MCF 10A (cell line): ENCODE measurements at regions of chr17 and their contacts with region 1.

Region 1: GRCh38 chr17:65231662-65232335 is 94.6 kb downstream of the RGS9 start:
- DNase-seq: peak; percentile 83
- H3K4me3 Mint-ChIP-seq: no peak overlapping the region
- H3K27ac Mint-ChIP-seq: no peak overlapping the region
- H3K4me1 Mint-ChIP-seq: no peaks in the 10 kb centered on the region
- H3K27me3 Mint-ChIP-seq: peaks cover 19% of the 10 kb centered on the region
- CTCF ChIP-seq: peak; percentile 83

Region 2: DNA sequence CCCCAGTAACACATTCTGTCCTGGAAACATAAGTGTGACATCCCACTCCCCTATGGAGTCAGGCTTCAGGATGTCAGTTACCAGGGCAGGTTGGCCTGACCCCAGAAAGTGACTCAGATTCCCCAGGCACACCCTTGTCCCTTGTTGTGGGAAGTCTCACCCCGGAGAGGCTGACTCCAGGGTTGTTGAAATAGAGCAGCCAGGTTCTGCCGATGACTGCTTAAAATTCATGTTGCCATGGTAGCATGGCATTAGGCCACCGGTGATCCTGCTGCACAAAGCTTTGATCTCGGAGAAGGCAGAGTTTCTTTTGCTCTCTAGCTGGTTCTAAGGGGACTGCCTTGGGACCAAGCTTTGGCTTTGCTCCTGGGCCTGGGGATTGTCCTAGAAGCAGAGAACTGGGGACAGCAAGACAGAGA is 12.0 kb after region 1 on chr17:
- CTCF ChIA-PET with region 1: interaction called, 20 read pairs
- POLR2A ChIA-PET with region 1: interaction called, 3 read pairs
- intact Hi-C with region 1: no loop called
- DNase-seq: peak; percentile 60
- H3K4me3 Mint-ChIP-seq: no peak overlapping the region
- H3K27ac Mint-ChIP-seq: no peak overlapping the region
- H3K4me1 Mint-ChIP-seq: peaks cover 6% of the 10 kb centered on the region
- H3K27me3 Mint-ChIP-seq: peaks cover 18% of the 10 kb centered on the region
- CTCF ChIP-seq: no peak

Region 3: DNA sequence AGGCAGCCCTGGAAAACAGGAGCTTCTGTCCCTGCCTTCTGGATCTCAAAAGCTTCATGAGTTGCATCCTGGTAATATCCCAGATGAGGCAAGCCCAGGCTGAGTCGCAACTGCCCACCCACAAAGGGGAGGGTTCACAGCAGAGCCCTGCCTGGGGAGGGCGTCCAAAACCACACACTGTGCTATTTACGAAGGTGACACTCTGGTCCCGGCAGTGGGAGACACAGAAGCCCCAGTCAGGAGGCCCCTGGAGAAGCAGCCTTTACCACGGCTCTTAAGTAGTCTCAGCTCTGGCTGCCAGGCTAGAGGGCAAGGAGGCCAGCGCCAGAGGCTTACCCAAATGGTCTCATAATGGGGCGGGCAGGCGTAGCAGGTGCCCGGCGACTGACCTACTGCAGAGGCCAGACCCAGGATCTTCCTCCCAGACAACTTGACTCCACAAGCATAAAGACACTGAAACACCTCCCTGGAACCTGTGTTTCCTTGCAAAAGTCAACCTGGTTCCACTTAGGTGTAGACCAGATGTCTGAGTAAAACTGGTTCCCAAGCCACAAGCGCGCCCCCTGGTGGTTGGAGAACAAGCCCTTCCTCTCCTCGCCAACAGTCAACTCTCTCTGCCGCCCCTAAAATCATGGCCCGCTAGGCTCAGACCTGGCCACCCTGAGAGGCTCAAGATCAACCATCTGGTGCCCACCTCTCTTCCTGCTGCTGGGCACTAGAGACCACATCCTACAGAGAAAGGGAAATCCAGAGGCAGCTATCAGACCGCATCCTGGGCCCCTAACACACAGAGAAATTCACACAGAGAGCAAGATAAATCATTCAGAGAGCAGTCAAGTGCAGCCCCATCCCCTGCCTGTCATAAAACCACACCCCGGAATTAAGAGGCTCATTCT is 324.5 kb after region 1 on chr17:
- CTCF ChIA-PET with region 1: interaction called, 11 read pairs
- POLR2A ChIA-PET with region 1: no interaction called
- intact Hi-C with region 1: loop called (anchors 2 kb)
- DNase-seq: peak; percentile 78
- H3K4me3 Mint-ChIP-seq: no peak overlapping the region
- H3K27ac Mint-ChIP-seq: no peak overlapping the region
- H3K4me1 Mint-ChIP-seq: no peaks in the 10 kb centered on the region
- H3K27me3 Mint-ChIP-seq: peaks cover 10% of the 10 kb centered on the region
- CTCF ChIP-seq: peak; percentile 84

Region 4: GRCh38 chr17:65988081-65988850 is 756.5 kb after region 1 on chr17:
- CTCF ChIA-PET with region 1: interaction called, 34 read pairs
- POLR2A ChIA-PET with region 1: no interaction called
- intact Hi-C with region 1: loop called (anchors 1 kb)
- DNase-seq: peak; percentile 57
- H3K4me3 Mint-ChIP-seq: no peak overlapping the region
- H3K27ac Mint-ChIP-seq: no peak overlapping the region
- H3K4me1 Mint-ChIP-seq: peaks cover 17% of the 10 kb centered on the region
- H3K27me3 Mint-ChIP-seq: no peaks in the 10 kb centered on the region
- CTCF ChIP-seq: peak; percentile 70

Region 5: GRCh38 chr17:66165513-66166123 is 933.8 kb after region 1 on chr17:
- CTCF ChIA-PET with region 1: interaction called, 80 read pairs
- POLR2A ChIA-PET with region 1: no interaction called
- intact Hi-C with region 1: loop called (anchors 1 kb)
- DNase-seq: peak; percentile 61
- H3K4me3 Mint-ChIP-seq: no peak overlapping the region
- H3K27ac Mint-ChIP-seq: no peak overlapping the region
- H3K4me1 Mint-ChIP-seq: no peaks in the 10 kb centered on the region
- H3K27me3 Mint-ChIP-seq: no peaks in the 10 kb centered on the region
- CTCF ChIP-seq: peak; percentile 75